ENCODE measurements at regions of chr2 and their contacts with region 1.

Region 1: GRCh38 chr2:71100195-71100964 is 29.6 kb downstream of the MCEE start:
- DNase-seq: peak; percentile 66
- H3K4me3 ChIP-seq: no peak overlapping the region
- H3K27ac ChIP-seq: no peak overlapping the region
- H3K4me1 ChIP-seq: no peaks in the 10 kb centered on the region
- H3K27me3 ChIP-seq: no peaks in the 10 kb centered on the region
- CTCF ChIP-seq: peak; percentile 76 to 81
- POLR2A ChIP-seq: no peak

Region 2: DNA sequence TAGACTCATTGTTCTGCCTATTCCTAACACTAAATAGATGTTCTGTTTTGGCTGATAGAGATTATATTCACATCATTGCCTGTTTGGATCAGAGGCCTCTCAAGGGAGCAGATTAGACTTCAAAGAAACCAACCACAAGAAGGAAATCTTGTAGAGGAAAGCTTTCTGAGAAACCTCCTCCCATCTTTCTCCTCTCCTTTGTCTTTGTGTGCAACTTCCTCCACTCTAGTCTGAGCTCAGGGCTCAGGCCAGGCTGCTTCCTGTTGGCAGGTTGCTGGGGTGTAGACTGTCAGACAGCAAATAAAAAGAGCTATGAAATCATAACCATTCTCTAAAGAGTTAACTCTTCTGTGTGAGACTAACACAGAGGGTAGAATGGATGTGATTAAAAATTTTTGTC is 659.8 kb before region 1 on chr2:
- CTCF ChIA-PET with region 1: no interaction called
- POLR2A ChIA-PET with region 1: no interaction called
- dilution Hi-C with region 1: no loop called
- intact Hi-C with region 1: no loop called
- DNase-seq: no peak
- H3K4me3 ChIP-seq: no peak overlapping the region
- H3K27ac ChIP-seq: no peak overlapping the region
- H3K4me1 ChIP-seq: no peaks in the 10 kb centered on the region
- H3K27me3 ChIP-seq: peaks cover 2 to 11% of the 10 kb centered on the region in 2 experiments
- CTCF ChIP-seq: no peak
- POLR2A ChIP-seq: no peak

Region 3: DNA sequence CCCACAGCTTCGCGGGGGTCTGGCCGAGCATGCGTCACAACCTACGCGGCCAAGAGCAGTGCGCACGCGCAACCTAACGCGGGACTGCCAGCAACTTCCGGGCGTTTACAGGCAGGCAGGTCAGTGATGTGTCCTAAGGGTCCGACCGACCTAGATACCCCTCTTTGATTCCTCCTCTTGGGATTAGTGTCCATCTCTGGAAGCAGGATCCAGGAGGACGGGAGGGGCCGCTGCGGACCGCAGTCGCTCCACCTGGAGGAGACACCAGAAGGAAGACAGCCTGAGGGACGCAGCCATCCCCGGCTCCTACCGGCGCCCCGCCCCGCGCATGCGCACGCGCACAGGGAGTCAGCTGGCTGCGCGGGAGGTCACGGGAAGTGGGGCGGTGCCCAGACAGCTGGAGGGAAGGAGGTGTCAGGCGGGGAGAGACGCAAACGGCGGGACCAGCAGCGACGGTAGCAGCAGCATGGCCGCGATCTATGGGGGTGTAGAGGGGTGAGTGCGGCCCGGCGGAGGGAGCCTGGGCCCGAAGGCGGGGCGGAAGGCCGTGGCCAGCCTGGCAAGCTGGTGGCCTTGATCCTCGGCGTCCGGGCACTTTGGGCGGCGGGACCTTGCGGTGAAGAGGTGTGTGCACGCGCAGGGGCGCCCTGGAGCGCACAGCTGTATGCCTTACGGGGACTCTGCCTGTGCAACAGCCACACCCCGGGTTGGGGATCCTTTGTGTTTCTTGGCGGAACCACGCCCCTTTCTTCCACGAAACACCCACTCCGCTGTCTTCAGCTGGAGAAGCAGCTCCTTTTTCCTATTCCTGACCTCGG is 32.0 kb before region 1 on chr2 and contains the start of gene NAGK:
- CTCF ChIA-PET with region 1: interaction called, 23 read pairs
- POLR2A ChIA-PET with region 1: interaction called, 3 read pairs
- dilution Hi-C with region 1: no loop called
- intact Hi-C with region 1: no loop called
- DNase-seq: peak; percentile 97
- H3K4me3 ChIP-seq: peak within 1 kb of the TSS; percentile 67 to 77 (median 72)
- H3K27ac ChIP-seq: peak within 1 kb of the TSS; percentile 69
- H3K4me1 ChIP-seq: peaks cover 27% of the 10 kb centered on the region
- H3K27me3 ChIP-seq: peaks cover 3 to 9% of the 10 kb centered on the region in 2 experiments
- CTCF ChIP-seq: no peak
- POLR2A ChIP-seq: peak; percentile 97
- total RNA-seq, gene NAGK: 125 and 130 TPM in 2 replicates

Region 4: GRCh38 chr2:71117063-71117462 is 16.7 kb after region 1 on chr2:
- CTCF ChIA-PET with region 1: interaction called, 13 read pairs
- POLR2A ChIA-PET with region 1: no interaction called
- dilution Hi-C with region 1: no loop called
- intact Hi-C with region 1: no loop called
- DNase-seq: no peak
- H3K4me3 ChIP-seq: no peak overlapping the region
- H3K27ac ChIP-seq: no peak overlapping the region
- H3K4me1 ChIP-seq: no peaks in the 10 kb centered on the region
- H3K27me3 ChIP-seq: no peaks in the 10 kb centered on the region
- CTCF ChIP-seq: no peak
- POLR2A ChIP-seq: no peak

Region 5: DNA sequence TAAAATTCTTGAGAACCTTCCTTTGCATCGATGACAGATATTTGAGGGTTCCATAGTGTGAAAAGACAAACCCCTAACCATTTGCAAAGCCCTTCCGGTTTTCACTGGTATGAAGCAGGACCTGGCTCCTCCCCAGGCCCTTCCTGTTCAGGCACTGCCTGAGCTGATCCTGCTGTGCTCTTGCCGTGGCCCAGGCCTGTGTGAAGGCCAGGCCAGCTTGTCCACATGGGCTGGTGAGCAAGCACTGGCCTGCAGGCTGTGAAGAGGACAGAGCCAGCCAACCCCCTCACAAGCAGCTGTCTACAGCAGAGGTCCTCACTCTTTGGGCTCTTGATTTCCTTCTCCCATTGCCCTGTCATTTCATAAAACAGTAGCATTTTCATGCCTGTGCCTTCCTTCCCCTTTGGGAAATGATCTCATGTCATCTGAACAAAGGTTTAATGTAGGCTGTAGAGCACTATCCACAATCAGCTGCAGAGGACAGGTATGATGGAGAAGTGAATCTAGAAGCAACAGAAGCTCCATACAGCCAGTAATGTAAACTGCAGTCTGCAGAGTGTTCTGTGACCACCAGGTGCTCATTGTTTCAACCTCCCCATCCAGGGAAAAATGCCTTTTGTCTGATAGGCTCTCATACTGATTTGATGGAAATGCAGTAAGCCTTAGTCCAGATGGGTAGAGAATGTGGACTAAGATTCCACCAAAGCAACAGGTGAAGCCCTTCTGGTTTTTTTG is 49.9 kb after region 1 on chr2:
- CTCF ChIA-PET with region 1: interaction called, 24 read pairs
- POLR2A ChIA-PET with region 1: no interaction called
- dilution Hi-C with region 1: no loop called
- intact Hi-C with region 1: no loop called
- DNase-seq: no peak
- H3K4me3 ChIP-seq: no peak overlapping the region
- H3K27ac ChIP-seq: no peak overlapping the region
- H3K4me1 ChIP-seq: no peaks in the 10 kb centered on the region
- H3K27me3 ChIP-seq: no peaks in the 10 kb centered on the region
- CTCF ChIP-seq: no peak
- POLR2A ChIP-seq: no peak

Region 6: GRCh38 chr2:71190656-71191569 is 90.5 kb after region 1 on chr2:
- CTCF ChIA-PET with region 1: interaction called, 20 read pairs
- POLR2A ChIA-PET with region 1: no interaction called
- dilution Hi-C with region 1: no loop called
- intact Hi-C with region 1: no loop called
- DNase-seq: peak; percentile 24
- H3K4me3 ChIP-seq: no peak overlapping the region
- H3K27ac ChIP-seq: no peak overlapping the region
- H3K4me1 ChIP-seq: no peaks in the 10 kb centered on the region
- H3K27me3 ChIP-seq: peaks cover 15% of the 10 kb centered on the region in 2 experiments
- CTCF ChIP-seq: peak; percentile 5 to 10
- POLR2A ChIP-seq: no peak